A549 (cell line): ENCODE measurements at regions of chr12 and their contacts with region 1.

Region 1: GRCh38 chr12:53159195-53159839 is 21.2 kb upstream of the ZNF740 start:
- DNase-seq: peak; percentile 89 to 96
- ATAC-seq: peak; percentile 97 to 98
- H3K4me3 ChIP-seq: no peak overlapping the region
- H3K27ac ChIP-seq: peak overlapping the region; percentile 55 to 82
- H3K4me1 ChIP-seq: peaks cover 12% of the 10 kb centered on the region
- CTCF ChIP-seq: peak; percentile 93
- EP300 ChIP-seq: no peak
- POLR2A ChIP-seq: no peak
- RAD21 ChIP-seq: peak; percentile 89 to 93

Region 2: GRCh38 chr12:53098982-53099651 is 60.2 kb before region 1 on chr12:
- CTCF ChIA-PET with region 1: interaction called, 17 read pairs
- POLR2A ChIA-PET with region 1: no interaction called
- DNase-seq: peak; percentile 95 to 98
- ATAC-seq: peak; percentile 71 to 75
- H3K4me3 ChIP-seq: peak overlapping the region; percentile 54
- H3K27ac ChIP-seq: peak overlapping the region; percentile 92 to 95
- H3K4me1 ChIP-seq: peaks cover 50% of the 10 kb centered on the region
- CTCF ChIP-seq: peak; percentile 98
- EP300 ChIP-seq: no peak
- POLR2A ChIP-seq: peak; percentile 30
- RAD21 ChIP-seq: peak; percentile 95 to 96

Region 3: GRCh38 chr12:53129170-53129569 is 30.1 kb before region 1 on chr12:
- CTCF ChIA-PET with region 1: interaction called, 14 read pairs
- POLR2A ChIA-PET with region 1: no interaction called
- DNase-seq: no peak
- ATAC-seq: peak; percentile 39 to 50; a peak in 4 of 6 replicates
- H3K4me3 ChIP-seq: no peak overlapping the region
- H3K27ac ChIP-seq: no peak overlapping the region
- H3K4me1 ChIP-seq: no peaks in the 10 kb centered on the region
- CTCF ChIP-seq: no peak
- EP300 ChIP-seq: no peak
- POLR2A ChIP-seq: no peak
- RAD21 ChIP-seq: no peak

Region 4: DNA sequence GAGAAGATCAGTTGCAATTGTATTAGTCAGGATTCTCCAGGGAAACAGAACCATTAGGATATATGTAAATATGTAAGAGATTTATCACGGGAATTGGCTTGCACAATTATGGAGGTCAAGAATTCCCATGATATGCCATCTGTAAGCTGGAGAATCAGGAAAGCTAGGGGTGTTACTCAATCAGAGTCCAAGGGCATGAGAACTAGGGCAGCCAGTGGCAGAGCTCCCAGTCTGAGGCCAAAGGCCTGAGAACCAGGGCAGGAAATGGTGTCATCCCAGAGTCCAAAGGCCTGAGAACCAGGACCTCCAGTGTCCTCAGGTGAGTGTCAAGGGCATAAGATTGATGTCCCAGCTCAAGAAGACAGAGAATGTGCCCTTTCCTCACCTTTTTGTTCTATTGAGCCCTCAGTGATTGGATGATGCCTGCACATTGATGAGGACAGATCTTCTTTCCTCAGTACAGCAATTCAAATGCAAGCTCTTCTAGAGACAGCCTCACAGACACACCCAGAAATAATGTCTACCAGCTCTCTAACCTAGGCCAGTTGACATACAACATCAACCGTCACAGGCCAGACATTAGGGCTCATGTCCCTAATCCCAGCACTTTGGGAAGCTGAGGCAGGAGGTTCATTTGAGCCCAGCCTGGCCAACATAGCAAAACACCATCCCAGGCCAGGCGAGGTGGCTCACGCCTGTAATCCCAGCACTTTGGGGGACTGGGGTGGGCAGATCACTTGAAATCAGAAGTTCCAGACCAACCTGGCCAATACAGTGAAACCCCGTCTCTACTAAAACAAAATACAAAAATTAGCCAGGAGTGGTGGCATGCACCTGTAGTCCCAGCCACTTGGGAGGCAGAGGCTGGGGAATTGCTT is 13.7 kb before region 1 on chr12:
- CTCF ChIA-PET with region 1: interaction called, 24 read pairs
- POLR2A ChIA-PET with region 1: no interaction called
- DNase-seq: no peak
- ATAC-seq: peak in 1 of 2 experiments; percentile 29; a peak in 2 of 6 replicates
- H3K4me3 ChIP-seq: no peak overlapping the region
- H3K27ac ChIP-seq: no peak overlapping the region
- H3K4me1 ChIP-seq: no peaks in the 10 kb centered on the region
- CTCF ChIP-seq: no peak
- EP300 ChIP-seq: no peak
- POLR2A ChIP-seq: no peak
- RAD21 ChIP-seq: no peak

Region 5: GRCh38 chr12:53180220-53180930 is 21.1 kb after region 1 on chr12 and contains the starts of genes CSAD and ZNF740:
- CTCF ChIA-PET with region 1: interaction called, 646 read pairs
- POLR2A ChIA-PET with region 1: interaction called, 15 read pairs
- DNase-seq: peak; percentile 98 to 99
- ATAC-seq: peak; percentile 97 to 98
- H3K4me3 ChIP-seq: peak within 1 kb of the TSS; percentile 76
- H3K27ac ChIP-seq: peak within 1 kb of the TSS; percentile 92 to 93
- H3K4me1 ChIP-seq: peaks cover 39% of the 10 kb centered on the region
- CTCF ChIP-seq: no peak
- EP300 ChIP-seq: no peak; a peak in 1 of 5 replicates
- POLR2A ChIP-seq: peak; percentile 90
- RAD21 ChIP-seq: 0 out of 5 replicates have a peak, but pooled peaks of 1 of the 2 experiments have one; percentile 14
- polyA plus RNA-seq, gene CSAD: 16.5 and 19.2 TPM in 2 replicates
- polyA plus RNA-seq, gene ZNF740: 28.8 and 32.9 TPM in 2 replicates

Region 6: DNA sequence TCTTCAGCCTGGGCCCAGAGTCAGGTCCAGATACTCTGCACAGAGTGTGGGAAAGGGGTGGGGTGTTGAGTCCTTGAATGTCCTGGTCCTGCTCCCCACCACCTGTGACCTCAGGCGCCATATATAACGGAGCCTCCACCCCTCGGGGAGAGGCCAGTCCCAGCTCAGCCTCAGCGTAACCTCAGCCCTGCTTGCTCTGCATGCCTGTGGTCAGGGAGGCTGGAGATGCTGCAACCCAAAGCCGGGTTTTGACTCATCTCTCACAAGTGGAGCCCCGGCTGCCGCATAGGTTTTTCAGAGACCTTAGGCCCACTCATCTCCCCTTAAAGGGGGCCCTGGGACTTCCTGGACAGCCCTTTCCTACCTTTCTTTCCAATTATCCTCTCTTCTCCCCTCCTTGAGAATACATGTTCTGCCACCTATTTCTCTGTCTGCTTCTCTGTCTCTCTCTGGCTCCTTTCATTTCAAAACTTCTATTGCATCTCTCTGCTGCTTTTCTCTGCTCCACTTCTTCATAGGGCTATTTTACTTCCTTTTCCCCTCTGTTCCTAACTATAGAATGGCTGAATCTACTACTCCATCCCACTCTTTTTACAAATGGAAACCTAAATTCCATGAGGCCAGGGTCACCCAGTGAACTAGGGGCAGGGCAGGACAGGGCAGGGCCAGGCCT is 46.6 kb after region 1 on chr12:
- CTCF ChIA-PET with region 1: interaction called, 646 read pairs
- POLR2A ChIA-PET with region 1: no interaction called
- DNase-seq: no peak
- ATAC-seq: peak; percentile 62 to 64
- H3K4me3 ChIP-seq: no peak overlapping the region
- H3K27ac ChIP-seq: no peak overlapping the region
- H3K4me1 ChIP-seq: no peaks in the 10 kb centered on the region
- CTCF ChIP-seq: no peak
- EP300 ChIP-seq: no peak
- POLR2A ChIP-seq: no peak
- RAD21 ChIP-seq: no peak

Region 7: GRCh38 chr12:53287741-53288216 is 128.5 kb after region 1 on chr12:
- CTCF ChIA-PET with region 1: interaction called, 23 read pairs
- POLR2A ChIA-PET with region 1: no interaction called
- DNase-seq: peak; percentile 79 to 82
- ATAC-seq: peak; percentile 84 to 91
- H3K4me3 ChIP-seq: no peak overlapping the region
- H3K27ac ChIP-seq: no peak overlapping the region
- H3K4me1 ChIP-seq: no peaks in the 10 kb centered on the region
- CTCF ChIP-seq: peak; percentile 78
- EP300 ChIP-seq: no peak
- POLR2A ChIP-seq: no peak
- RAD21 ChIP-seq: peak; percentile 79 to 84